CD4-positive, alpha-beta memory T cell (primary cell): ENCODE measurements at regions of chr14 and their contacts with region 1.

Region 1: GRCh38 chr14:31561155-31561846 is at the start of gene NUBPL:
- DNase-seq: peak; percentile 96 to 98 (median 97)
- H3K4me3 ChIP-seq: peak within 1 kb of the TSS; percentile 94
- H3K4me3 Mint-ChIP-seq: peak within 1 kb of the TSS; percentile 94 to 98 (median 96)
- H3K27ac ChIP-seq: peak within 1 kb of the TSS; percentile 62
- H3K27ac Mint-ChIP-seq: peak within 1 kb of the TSS; percentile 94 to 99 (median 98)
- H3K4me1 ChIP-seq: peaks cover 17% of the 10 kb centered on the region
- H3K4me1 Mint-ChIP-seq: peaks cover 16 to 27% (median 21%) of the 10 kb centered on the region in 4 donors
- H3K27me3 ChIP-seq: no peaks in the 10 kb centered on the region
- H3K27me3 Mint-ChIP-seq: peaks cover 9 to 21% of the 10 kb centered on the region in 2 donors
- total RNA-seq, gene NUBPL: 7.4 to 7.5 TPM

Region 2: DNA sequence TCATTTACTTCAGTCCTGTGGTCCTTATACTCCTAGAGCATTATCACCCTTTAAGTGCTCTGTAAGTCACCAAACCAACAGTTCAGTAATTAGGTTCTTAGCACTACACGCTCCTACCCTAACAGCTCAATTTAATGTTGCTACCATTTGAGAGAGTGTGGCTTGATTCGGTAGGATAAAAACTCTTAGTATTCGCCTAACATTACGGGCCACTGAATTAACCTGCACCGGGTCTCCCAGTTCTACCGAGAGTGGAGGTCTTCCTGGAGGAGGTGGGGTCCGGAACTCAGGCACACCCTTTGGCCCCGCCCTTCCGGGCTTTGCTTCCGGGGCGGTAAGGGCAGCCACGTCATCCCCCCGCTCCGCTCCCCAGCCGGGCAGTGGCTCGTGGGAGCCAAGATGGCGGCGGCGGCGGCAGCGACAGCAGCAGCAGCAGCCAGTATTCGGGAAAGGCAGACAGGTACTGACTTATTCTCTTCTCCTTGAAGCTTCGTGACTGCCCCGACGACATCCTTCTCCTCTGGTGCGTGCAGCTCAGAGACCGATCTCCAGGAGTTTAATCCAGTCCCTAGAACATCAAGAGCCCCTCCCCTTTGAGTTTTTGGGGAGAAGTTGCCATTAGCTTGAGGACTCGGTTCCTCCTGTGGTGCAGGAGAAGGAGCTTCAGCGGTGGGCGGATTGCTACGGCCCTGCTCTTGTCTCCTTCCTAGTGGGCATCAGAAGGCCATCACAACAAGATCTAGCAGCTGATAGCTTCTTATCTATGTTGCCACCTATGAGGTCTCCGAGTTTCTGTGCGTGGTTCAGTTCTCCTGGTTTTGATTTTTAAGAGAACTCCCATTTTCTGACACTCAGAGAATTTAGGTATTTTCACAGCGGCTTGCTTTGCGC is 939.1 kb before region 1 on chr14 and contains the start of gene SCFD1:
- CTCF ChIA-PET with region 1: no interaction called
- POLR2A ChIA-PET with region 1: no interaction called
- intact Hi-C with region 1: loop called (anchors 5 kb)
- DNase-seq: peak; percentile 88 to 93 (median 90)
- H3K4me3 ChIP-seq: peak within 1 kb of the TSS; percentile 74 to 97
- H3K4me3 Mint-ChIP-seq: peak within 1 kb of the TSS; percentile 93 to 99 (median 96)
- H3K27ac ChIP-seq: peak within 1 kb of the TSS; percentile 81
- H3K27ac Mint-ChIP-seq: peak within 1 kb of the TSS; percentile 96 to 99 (median 97)
- H3K4me1 ChIP-seq: peaks cover 52% of the 10 kb centered on the region
- H3K4me1 Mint-ChIP-seq: peaks cover 26 to 53% (median 40%) of the 10 kb centered on the region in 4 donors
- H3K27me3 ChIP-seq: no peaks in the 10 kb centered on the region
- H3K27me3 Mint-ChIP-seq: no peaks in the 10 kb centered on the region
- total RNA-seq, gene SCFD1: 58.1 to 72.6 TPM

Region 3: GRCh38 chr14:31026395-31027118 is 534.7 kb before region 1 on chr14:
- CTCF ChIA-PET with region 1: no interaction called
- POLR2A ChIA-PET with region 1: interaction called, 4 read pairs
- intact Hi-C with region 1: loop called (anchors 2 kb)
- DNase-seq: peak; percentile 85 to 91 (median 87)
- H3K4me3 ChIP-seq: peak overlapping the region; percentile 66 to 87
- H3K4me3 Mint-ChIP-seq: peak overlapping the region; percentile 93 to 100 (median 98)
- H3K27ac ChIP-seq: peak overlapping the region; percentile 95
- H3K27ac Mint-ChIP-seq: peak overlapping the region; percentile 96 to 99 (median 99)
- H3K4me1 ChIP-seq: peaks cover 36% of the 10 kb centered on the region
- H3K4me1 Mint-ChIP-seq: peaks cover 39 to 64% (median 48%) of the 10 kb centered on the region in 4 donors
- H3K27me3 ChIP-seq: no peaks in the 10 kb centered on the region
- H3K27me3 Mint-ChIP-seq: no peaks in the 10 kb centered on the region

Region 4: DNA sequence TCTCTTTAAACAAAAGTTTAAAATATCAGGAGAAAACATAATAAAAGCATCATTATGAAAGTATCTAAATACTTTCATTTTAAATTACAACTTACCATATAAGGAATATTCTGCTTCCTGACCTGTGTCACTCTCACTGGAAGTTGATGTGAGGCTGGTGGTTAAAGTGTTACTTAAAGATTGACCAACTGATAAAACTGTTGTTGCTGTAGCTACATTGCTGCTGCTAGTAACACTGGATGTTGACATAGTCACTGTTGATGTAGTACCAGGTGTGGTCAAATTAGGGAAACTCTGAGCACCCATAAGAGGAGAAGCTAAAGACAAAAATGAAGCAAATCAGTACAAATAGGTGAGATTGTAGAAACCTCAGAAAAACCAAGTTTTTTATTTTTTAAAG is 433.6 kb before region 1 on chr14:
- CTCF ChIA-PET with region 1: no interaction called
- POLR2A ChIA-PET with region 1: no interaction called
- intact Hi-C with region 1: loop called (anchors 5 kb)
- DNase-seq: peak; percentile 80 to 91 (median 85)
- H3K4me3 ChIP-seq: no peak overlapping the region
- H3K4me3 Mint-ChIP-seq: peak overlapping the region in 7 of 8 donors; percentile 5 to 80 (median 54)
- H3K27ac ChIP-seq: peak overlapping the region; percentile 63
- H3K27ac Mint-ChIP-seq: peak overlapping the region; percentile 65 to 98 (median 87)
- H3K4me1 ChIP-seq: peaks cover 47% of the 10 kb centered on the region
- H3K4me1 Mint-ChIP-seq: peaks cover 39 to 58% (median 49%) of the 10 kb centered on the region in 4 donors
- H3K27me3 ChIP-seq: no peaks in the 10 kb centered on the region
- H3K27me3 Mint-ChIP-seq: no peaks in the 10 kb centered on the region

Region 5: DNA sequence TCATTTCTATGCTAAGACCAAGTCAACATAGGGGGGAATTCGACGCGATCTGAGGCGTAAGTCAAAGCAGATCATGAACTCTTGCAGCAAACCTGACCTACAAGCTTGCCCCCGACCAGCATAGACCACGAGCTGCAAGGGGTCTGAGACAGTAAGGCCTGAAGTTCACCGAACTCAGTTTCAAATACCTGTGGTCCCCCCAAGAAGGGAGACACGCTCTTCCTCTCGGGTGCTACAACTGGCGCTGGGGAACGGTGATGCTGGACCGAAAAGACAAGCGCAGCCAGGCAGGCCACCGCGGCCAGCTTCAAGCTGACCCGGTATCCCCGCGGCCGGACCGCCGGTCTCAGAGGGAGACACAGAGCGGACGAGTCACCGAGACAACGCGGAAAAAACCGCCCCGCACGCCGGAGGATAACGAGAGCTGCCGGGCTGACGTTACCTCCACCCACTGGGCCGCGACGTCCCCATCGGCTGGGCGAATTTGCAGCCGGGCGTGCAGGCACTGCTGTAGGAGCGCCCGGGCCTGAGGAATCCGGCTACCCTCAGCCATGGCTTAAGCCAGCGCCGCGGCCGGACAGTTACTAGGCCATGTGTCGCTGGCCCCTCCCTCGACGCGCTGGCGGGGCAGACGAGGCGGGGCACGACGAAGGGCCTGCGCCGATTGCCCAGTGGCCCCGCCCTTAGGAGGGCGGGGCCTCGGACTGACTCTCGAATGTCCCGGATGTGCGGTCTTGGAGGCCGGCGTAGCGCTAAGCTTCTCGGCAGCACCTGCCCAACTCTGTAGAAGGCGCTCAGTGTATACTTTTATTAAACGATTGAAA is 104.2 kb before region 1 on chr14 and contains the start of gene DTD2:
- CTCF ChIA-PET with region 1: no interaction called
- POLR2A ChIA-PET with region 1: no interaction called
- intact Hi-C with region 1: loop called (anchors 1 kb)
- DNase-seq: peak; percentile 87 to 88 (median 88)
- H3K4me3 ChIP-seq: peak within 1 kb of the TSS; percentile 53 to 69
- H3K4me3 Mint-ChIP-seq: peak within 1 kb of the TSS; percentile 96 to 99 (median 97)
- H3K27ac ChIP-seq: peak within 1 kb of the TSS; percentile 89
- H3K27ac Mint-ChIP-seq: peak within 1 kb of the TSS; percentile 86 to 98 (median 97)
- H3K4me1 ChIP-seq: peaks cover 13% of the 10 kb centered on the region
- H3K4me1 Mint-ChIP-seq: peaks cover 13 to 34% (median 26%) of the 10 kb centered on the region in 4 donors
- H3K27me3 ChIP-seq: no peaks in the 10 kb centered on the region
- H3K27me3 Mint-ChIP-seq: peaks cover 0 to 3% of the 10 kb centered on the region in 2 donors
- total RNA-seq, gene DTD2: 15.1 to 20.2 TPM

Region 6: GRCh38 chr14:31501870-31502269 is 59.4 kb before region 1 on chr14:
- CTCF ChIA-PET with region 1: no interaction called
- POLR2A ChIA-PET with region 1: no interaction called
- intact Hi-C with region 1: no loop called
- DNase-seq: no peak
- H3K4me3 ChIP-seq: no peak overlapping the region
- H3K4me3 Mint-ChIP-seq: no peak overlapping the region
- H3K27ac ChIP-seq: no peak overlapping the region
- H3K27ac Mint-ChIP-seq: no peak overlapping the region
- H3K4me1 ChIP-seq: no peaks in the 10 kb centered on the region
- H3K4me1 Mint-ChIP-seq: no peaks in the 10 kb centered on the region
- H3K27me3 ChIP-seq: no peaks in the 10 kb centered on the region
- H3K27me3 Mint-ChIP-seq: peaks cover 2% of the 10 kb centered on the region in 2 donors

Region 7: GRCh38 chr14:32202998-32203882 is 641.9 kb after region 1 on chr14 and contains the start of gene RNU6-8:
- CTCF ChIA-PET with region 1: no interaction called
- POLR2A ChIA-PET with region 1: no interaction called
- intact Hi-C with region 1: loop called (anchors 1 kb)
- DNase-seq: peak; percentile 89 to 95 (median 94)
- H3K4me3 ChIP-seq: peak within 1 kb of the TSS; percentile 50 to 68
- H3K4me3 Mint-ChIP-seq: peak within 1 kb of the TSS; percentile 90 to 96 (median 93)
- H3K27ac ChIP-seq: peak within 1 kb of the TSS; percentile 94
- H3K27ac Mint-ChIP-seq: peak within 1 kb of the TSS; percentile 96 to 100 (median 99)
- H3K4me1 ChIP-seq: peaks cover 23% of the 10 kb centered on the region
- H3K4me1 Mint-ChIP-seq: peaks cover 22 to 41% (median 28%) of the 10 kb centered on the region in 4 donors
- H3K27me3 ChIP-seq: no peaks in the 10 kb centered on the region
- H3K27me3 Mint-ChIP-seq: peaks cover 0 to 2% of the 10 kb centered on the region in 2 donors
- total RNA-seq, gene RNU6-8: not detected